ENCODE measurements at regions of chr7 and their contacts with region 1.

Region 1: GRCh38 chr7:134986363-134987251 is at the start of gene AGBL3:
- DNase-seq: peak; percentile 97
- H3K4me3 ChIP-seq: peak within 1 kb of the TSS; percentile 74
- H3K27ac ChIP-seq: peak within 1 kb of the TSS; percentile 92
- H3K4me1 ChIP-seq: peaks cover 35% of the 10 kb centered on the region
- H3K27me3 ChIP-seq: no peaks in the 10 kb centered on the region
- CTCF ChIP-seq: peak; percentile 72
- total RNA-seq, gene AGBL3: 1.5 TPM

Region 2: DNA sequence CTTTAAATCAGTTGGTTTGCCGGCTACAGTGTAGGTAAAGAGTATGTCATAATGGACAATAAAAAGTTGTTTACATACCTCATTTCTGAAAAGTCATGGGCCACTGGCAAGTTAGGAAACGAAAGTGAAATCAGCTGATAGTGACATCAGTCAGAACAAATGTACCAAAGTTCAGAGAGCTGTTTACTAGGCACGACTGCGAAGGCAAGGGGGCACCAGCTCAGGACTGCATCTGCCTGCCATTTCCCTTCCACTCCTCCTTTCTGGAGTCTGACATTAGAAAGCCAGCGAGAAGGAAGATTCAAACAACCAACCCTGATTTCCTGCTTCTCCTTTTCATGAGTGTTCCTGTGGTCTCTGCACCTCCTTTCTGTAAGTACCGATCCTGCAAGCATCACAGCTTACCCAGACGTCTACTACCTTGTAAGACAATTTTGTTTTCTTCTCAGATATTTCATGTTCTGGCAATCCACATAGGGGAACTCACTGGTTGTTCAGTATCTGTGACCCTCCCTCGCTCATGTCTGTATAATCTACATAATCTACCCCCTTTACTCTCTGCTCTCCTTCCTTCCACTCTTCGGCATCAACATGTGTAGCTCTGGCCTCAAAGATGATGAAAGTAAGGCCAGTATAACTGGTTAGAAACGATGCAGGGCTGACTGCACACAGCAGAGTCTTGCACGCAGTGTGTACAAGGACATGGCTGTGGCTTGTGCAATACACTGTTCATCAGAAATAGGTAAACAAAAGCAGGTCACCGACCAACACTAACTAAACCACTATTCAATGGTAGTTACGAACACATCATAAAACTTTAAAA is 161.5 kb after region 1 on chr7 and contains the start of gene TMEM140:
- intact Hi-C with region 1: loop called (anchors 10 kb)
- DNase-seq: no peak
- H3K4me3 ChIP-seq: peak within 1 kb of the TSS; percentile 74
- H3K27ac ChIP-seq: peak within 1 kb of the TSS; percentile 98
- H3K4me1 ChIP-seq: peaks cover 87% of the 10 kb centered on the region
- H3K27me3 ChIP-seq: no peaks in the 10 kb centered on the region
- CTCF ChIP-seq: peak; percentile 26
- total RNA-seq, gene TMEM140: 23.3 TPM

Region 3: DNA sequence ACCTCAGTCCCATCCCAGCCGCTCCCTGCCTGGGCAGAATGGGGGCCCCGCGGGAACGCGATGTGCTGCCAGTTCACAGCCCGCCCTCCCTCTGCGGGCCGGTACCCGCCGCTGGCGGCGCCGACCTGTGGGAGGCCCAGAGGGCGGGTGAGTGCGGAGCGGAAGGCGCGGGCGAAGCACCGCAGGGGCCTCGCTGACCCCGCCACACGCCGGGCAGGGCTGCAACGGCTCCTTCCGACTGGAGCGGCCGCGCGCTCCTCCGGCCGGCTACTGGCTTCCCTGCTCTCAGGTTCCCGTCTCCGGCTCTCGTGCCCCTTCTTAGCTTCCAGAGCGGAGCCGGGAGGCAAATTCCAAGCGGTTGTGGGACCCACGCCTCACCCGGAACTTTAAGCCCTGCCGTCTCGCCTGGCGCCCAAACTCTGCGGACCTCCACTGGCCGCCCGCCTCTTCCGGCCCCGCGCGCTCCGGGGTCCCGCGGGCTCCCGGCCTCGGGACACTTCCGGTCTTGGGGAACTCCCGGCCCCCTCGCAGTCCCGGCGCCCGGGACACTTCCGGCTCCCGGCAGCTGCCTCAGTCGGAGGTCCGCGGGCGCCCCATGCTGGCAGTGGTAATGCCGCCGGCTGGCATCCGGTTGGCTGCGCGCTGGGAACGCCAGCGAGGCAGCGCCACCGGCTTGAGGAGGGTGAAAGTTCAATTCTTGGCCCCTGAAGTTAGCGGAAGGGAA is 183.8 kb after region 1 on chr7 and contains the start of gene CYREN:
- intact Hi-C with region 1: loop called (anchors 10 kb)
- DNase-seq: peak; percentile 96
- H3K4me3 ChIP-seq: peak within 1 kb of the TSS; percentile 90
- H3K27ac ChIP-seq: peak within 1 kb of the TSS; percentile 99
- H3K4me1 ChIP-seq: peaks cover 55% of the 10 kb centered on the region
- H3K27me3 ChIP-seq: no peaks in the 10 kb centered on the region
- CTCF ChIP-seq: peak; percentile 67
- total RNA-seq, gene CYREN: 29.8 TPM

Measured in left ventricle myocardium inferior (tissue), 1 donor.